ENCODE measurements at regions of chr3 and their contacts with region 1.

Region 1: GRCh38 chr3:25664810-25665314 is at the start of gene TOP2B:
- DNase-seq: peak; percentile 98
- H3K4me3 ChIP-seq: peak within 1 kb of the TSS; percentile 83 to 98 (median 92)
- H3K27ac ChIP-seq: peak within 1 kb of the TSS; percentile 76
- H3K4me1 ChIP-seq: peaks cover 19% of the 10 kb centered on the region
- H3K27me3 ChIP-seq: no peaks in the 10 kb centered on the region
- CTCF ChIP-seq: no peak
- POLR2A ChIP-seq: peak; percentile 24
- total RNA-seq, gene TOP2B: 98.9 and 102 TPM in 2 replicates

Region 2: GRCh38 chr3:25689219-25689618 is 24.4 kb after region 1 on chr3:
- CTCF ChIA-PET with region 1: interaction called, 3 read pairs
- POLR2A ChIA-PET with region 1: no interaction called
- dilution Hi-C with region 1: no loop called
- intact Hi-C with region 1: loop called (anchors 1 kb)
- DNase-seq: peak; percentile 76
- H3K4me3 ChIP-seq: no peak overlapping the region
- H3K27ac ChIP-seq: peak overlapping the region; percentile 2
- H3K4me1 ChIP-seq: peaks cover 21% of the 10 kb centered on the region
- H3K27me3 ChIP-seq: no peaks in the 10 kb centered on the region
- CTCF ChIP-seq: no peak
- POLR2A ChIP-seq: no peak

Region 3: GRCh38 chr3:25744470-25744869 is 79.6 kb after region 1 on chr3:
- CTCF ChIA-PET with region 1: no interaction called
- POLR2A ChIA-PET with region 1: no interaction called
- dilution Hi-C with region 1: no loop called
- intact Hi-C with region 1: loop called (anchors 5 kb)
- DNase-seq: no peak
- H3K4me3 ChIP-seq: no peak overlapping the region
- H3K27ac ChIP-seq: no peak overlapping the region
- H3K4me1 ChIP-seq: peaks cover 4% of the 10 kb centered on the region
- H3K27me3 ChIP-seq: no peaks in the 10 kb centered on the region
- CTCF ChIP-seq: no peak
- POLR2A ChIP-seq: no peak

Region 4: DNA sequence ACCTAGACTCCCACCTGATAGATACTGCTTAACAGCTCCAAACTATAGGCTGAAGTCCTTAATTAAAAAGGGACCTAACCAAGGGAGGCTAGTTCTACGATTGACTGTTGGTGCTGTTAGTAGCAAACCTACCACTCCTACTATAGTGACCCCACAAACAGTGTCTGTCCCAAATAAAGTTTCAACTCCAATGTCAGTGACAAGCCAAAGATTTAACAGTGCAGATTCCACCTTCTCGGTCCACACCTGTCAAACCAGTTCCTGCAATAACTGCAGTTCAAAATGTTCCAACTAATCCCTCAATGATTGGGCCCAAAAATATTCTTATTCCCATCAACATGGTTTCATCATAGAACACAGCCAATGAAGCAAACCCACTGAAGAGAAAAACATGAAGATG is 90.4 kb after region 1 on chr3:
- CTCF ChIA-PET with region 1: no interaction called
- POLR2A ChIA-PET with region 1: no interaction called
- dilution Hi-C with region 1: no loop called
- intact Hi-C with region 1: no loop called
- DNase-seq: no peak
- H3K4me3 ChIP-seq: no peak overlapping the region
- H3K27ac ChIP-seq: no peak overlapping the region
- H3K4me1 ChIP-seq: no peaks in the 10 kb centered on the region
- H3K27me3 ChIP-seq: no peaks in the 10 kb centered on the region
- CTCF ChIP-seq: no peak
- POLR2A ChIP-seq: no peak

Region 5: DNA sequence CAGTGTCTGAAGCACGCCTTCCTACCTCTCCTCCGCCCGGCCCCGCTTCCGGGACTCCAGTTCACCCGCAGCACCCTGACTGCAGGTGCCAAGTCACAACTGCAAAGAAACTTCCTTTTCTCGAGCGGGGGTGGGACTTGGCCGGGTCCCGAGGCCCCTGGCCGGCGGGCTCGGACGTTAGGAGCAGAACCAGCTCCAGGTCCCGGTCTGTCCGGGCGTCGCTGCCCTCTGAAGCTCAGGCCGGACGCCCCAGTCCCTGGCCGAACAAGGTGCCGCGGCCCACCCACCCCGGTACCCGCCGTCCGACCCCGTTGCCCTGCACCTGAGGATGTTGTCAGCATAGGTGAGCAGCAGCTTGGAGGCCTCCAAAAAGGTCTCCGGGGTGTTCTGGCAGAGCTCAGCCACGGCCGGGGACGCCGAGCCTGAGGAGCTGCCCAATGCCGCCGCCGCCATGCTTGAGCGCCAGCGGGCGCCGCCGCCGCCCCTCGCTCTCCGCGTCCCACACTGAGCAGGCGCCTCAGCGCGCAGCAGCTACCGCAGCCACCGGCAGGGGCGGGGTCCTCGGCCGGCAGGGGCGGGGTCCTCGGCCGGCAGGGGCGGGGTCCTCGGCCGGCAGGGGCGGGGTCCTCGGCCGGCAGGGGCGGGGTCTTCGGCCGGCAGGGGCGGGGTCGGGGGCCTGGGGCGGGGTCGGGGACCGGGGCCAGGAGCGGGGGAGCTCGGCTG is 118.2 kb after region 1 on chr3 and contains the start of gene NGLY1:
- CTCF ChIA-PET with region 1: interaction called, 5 read pairs
- POLR2A ChIA-PET with region 1: no interaction called
- dilution Hi-C with region 1: no loop called
- intact Hi-C with region 1: loop called (anchors 1 kb)
- DNase-seq: peak; percentile 81
- H3K4me3 ChIP-seq: peak within 1 kb of the TSS; percentile 57 to 98 (median 81)
- H3K27ac ChIP-seq: peak within 1 kb of the TSS; percentile 47
- H3K4me1 ChIP-seq: peaks cover 13% of the 10 kb centered on the region
- H3K27me3 ChIP-seq: no peaks in the 10 kb centered on the region
- CTCF ChIP-seq: peak in 1 of 2 donors; percentile 5
- POLR2A ChIP-seq: peak; percentile 89
- total RNA-seq, gene NGLY1: 29.6 and 31.5 TPM in 2 replicates

Measured in endothelial cell of umbilical vein (primary cell).